Esophagus muscularis mucosa (tissue), 4 donors: ENCODE measurements at regions of chr4 and their contacts with region 1.

Region 1: GRCh38 chr4:142126890-142127497 is 490.6 kb downstream of the IL15 start:
- DNase-seq: no peak
- H3K4me3 ChIP-seq: no peak overlapping the region
- H3K27ac ChIP-seq: no peak overlapping the region
- H3K4me1 ChIP-seq: peaks cover 20 to 41% (median 30%) of the 10 kb centered on the region in 4 donors
- H3K27me3 ChIP-seq: no peaks in the 10 kb centered on the region
- CTCF ChIP-seq: peak; percentile 69 to 82 (median 80)
- EP300 ChIP-seq: no peak
- POLR2A ChIP-seq: no peak

Region 2: DNA sequence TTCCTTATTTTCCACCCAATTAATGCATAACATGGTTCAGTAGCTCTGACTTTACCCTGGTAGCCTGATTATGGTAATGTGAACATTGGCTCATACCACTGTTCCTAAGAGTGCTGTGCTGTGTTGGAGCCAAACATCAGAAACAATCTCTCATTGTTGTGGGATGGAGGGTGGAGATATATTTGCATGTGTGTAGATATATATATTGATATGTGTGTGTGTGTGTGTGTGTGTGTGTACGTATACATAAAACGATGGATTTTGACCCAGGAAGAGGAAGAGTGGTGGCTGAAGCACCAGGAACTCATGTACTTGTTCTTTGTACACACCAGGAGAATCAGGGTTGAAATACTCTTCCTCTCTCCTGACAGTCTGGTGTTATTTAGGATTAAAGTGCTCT is 242.9 kb before region 1 on chr4:
- intact Hi-C with region 1: no loop called
- DNase-seq: no peak
- H3K4me3 ChIP-seq: no peak overlapping the region
- H3K27ac ChIP-seq: no peak overlapping the region
- H3K4me1 ChIP-seq: no peaks in the 10 kb centered on the region
- H3K27me3 ChIP-seq: no peaks in the 10 kb centered on the region
- CTCF ChIP-seq: no peak
- EP300 ChIP-seq: no peak
- POLR2A ChIP-seq: no peak

Region 3: DNA sequence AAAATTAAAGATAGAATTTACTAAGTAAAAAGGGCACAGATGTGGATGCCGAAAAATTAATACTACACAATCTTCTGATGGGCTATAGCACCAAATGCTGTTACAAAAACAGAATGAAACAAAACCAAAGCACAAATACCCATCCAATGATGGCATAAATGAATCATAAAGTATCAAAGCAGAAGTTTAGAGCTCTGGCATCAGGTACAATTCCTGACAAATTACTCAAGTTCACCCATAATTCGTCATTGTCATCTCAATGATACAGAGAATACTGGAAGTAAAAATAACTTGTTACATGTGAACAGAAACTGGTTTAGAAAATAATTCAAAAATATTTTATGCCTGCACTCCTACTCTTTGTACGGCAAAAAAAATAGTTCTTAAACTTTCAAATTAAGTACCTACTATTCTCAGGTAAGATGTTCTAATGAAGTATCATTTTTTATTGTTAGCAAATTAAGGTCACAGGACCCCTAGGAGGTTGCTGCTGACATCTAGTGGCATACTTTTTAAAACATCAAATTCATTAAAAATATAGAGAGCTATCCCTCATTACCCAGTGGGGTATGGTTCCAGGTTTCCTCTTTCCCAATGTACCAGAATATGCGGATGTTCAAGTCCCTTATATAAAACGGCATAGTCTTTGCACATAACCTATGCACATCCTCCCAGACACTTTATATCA is 593.0 kb after region 1 on chr4:
- intact Hi-C with region 1: loop called (anchors 10 kb)
- DNase-seq: no peak
- H3K4me3 ChIP-seq: no peak overlapping the region
- H3K27ac ChIP-seq: no peak overlapping the region
- H3K4me1 ChIP-seq: no peaks in the 10 kb centered on the region
- H3K27me3 ChIP-seq: no peaks in the 10 kb centered on the region
- CTCF ChIP-seq: peak in 2 of 3 experiments; percentile 28 to 42
- EP300 ChIP-seq: no peak
- POLR2A ChIP-seq: no peak

Region 4: GRCh38 chr4:142846729-142847596 is 720.0 kb after region 1 on chr4:
- intact Hi-C with region 1: loop called (anchors 5 kb)
- DNase-seq: no peak
- H3K4me3 ChIP-seq: peak overlapping the region; percentile 69 to 77 (median 72)
- H3K27ac ChIP-seq: peak overlapping the region; percentile 72 to 79 (median 74)
- H3K4me1 ChIP-seq: peaks cover 15 to 30% (median 26%) of the 10 kb centered on the region in 4 donors
- H3K27me3 ChIP-seq: peaks cover 0 to 7% (median 0%) of the 10 kb centered on the region in 4 donors
- CTCF ChIP-seq: peak; percentile 31 to 36 (median 36)
- EP300 ChIP-seq: no peak
- POLR2A ChIP-seq: no peak

Region 5: DNA sequence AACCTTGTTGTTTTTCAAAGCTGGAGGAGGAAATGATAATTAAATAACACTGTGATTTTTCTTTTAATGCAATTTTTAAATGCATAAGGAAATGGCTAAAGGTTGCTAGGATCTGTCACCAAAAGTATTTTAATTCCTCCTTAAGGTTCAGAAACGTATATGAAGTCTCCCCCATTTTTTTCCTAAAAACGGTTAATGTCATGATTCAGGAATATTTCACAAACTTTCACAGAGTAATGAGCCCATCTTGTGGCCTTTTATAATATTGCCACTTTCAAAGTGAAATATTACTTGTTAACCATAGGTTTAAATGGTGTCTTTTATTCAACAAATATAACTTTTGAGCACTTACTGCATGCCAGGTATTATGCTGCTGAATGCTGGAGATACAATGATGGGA is 958.2 kb after region 1 on chr4:
- intact Hi-C with region 1: loop called (anchors 10 kb)
- DNase-seq: no peak
- H3K4me3 ChIP-seq: no peak overlapping the region
- H3K27ac ChIP-seq: no peak overlapping the region
- H3K4me1 ChIP-seq: peaks cover 0 to 8% (median 0%) of the 10 kb centered on the region in 4 donors
- H3K27me3 ChIP-seq: no peaks in the 10 kb centered on the region
- CTCF ChIP-seq: peak; percentile 25 to 37 (median 31)
- EP300 ChIP-seq: no peak
- POLR2A ChIP-seq: no peak